ENCODE measurements at regions of chr2 and their contacts with region 1.

Region 1: DNA sequence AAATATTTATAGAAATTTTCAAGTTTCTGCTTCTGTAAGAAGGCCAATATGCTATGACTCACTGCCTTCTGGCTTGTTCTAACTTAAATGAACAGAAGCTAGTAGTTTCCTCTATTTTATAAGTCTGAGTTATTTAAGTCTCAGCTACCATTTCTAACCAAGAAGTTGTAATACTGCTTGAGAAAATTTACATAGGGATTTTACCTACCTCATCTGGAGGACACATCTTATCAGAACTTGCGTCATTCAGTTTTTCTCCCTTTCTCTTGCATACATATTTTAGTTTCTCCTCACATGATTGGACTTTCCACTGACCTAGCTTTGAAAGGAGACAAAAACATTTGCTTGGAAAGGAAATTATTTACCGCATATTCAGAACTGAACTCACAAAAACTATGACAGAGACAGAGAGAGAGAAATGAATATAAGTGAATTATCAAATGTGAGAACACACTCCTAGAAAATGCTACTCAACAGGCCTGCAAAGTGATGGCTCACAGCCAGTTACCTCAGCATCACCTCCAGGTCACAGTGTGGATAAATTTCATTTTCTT is 81.1 kb upstream of the CD302 start:
- DNase-seq: peak; percentile 74
- ATAC-seq: peak; percentile 87
- H3K4me3 Mint-ChIP-seq: no peak overlapping the region
- H3K27ac Mint-ChIP-seq: peak overlapping the region; percentile 76
- H3K4me1 Mint-ChIP-seq: peaks cover 62% of the 10 kb centered on the region
- H3K27me3 Mint-ChIP-seq: no peaks in the 10 kb centered on the region

Region 2: DNA sequence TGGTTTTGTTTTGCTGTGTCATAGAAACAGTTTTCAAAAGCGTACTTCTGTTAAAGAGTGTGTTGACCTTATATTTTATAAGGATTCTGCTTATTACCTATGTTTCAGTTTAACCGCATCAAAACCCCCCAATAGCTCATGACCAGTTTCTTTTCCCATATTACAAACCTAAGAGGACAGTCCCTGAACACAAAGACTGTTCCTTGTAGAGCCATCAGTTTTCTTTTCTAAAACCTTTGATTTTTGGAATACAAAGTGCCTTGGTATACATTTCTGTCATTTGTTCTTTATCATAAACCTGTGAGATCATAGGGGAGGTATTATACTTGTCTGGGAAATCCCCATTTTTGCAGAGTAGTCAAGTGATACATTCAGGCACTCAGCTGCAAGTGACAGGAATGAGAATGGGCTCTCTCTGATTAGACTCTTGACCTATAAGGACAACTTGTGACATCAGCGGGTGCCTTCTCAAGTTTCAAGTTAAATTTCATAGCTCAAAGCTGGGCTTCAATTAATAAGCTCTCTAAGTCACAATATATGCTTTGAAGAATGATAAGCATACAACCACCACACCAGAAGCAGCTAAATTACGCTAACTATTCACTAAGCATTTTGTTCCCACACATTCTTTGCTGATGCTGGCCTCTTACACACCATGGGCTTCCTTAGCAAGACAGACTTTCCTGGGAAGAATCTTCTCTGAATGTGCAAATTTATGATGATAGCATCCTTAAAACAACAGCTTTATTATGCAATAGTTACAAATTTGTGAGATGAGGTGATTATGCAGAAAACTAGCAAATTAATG is 16.3 kb after region 1 on chr2:
- CTCF ChIA-PET with region 1: interaction called, 10 read pairs
- POLR2A ChIA-PET with region 1: interaction called, 15 read pairs
- intact Hi-C with region 1: loop called (anchors 1 kb)
- DNase-seq: peak; percentile 51
- ATAC-seq: peak; percentile 86
- H3K4me3 Mint-ChIP-seq: peak overlapping the region; percentile 46
- H3K27ac Mint-ChIP-seq: peak overlapping the region; percentile 82
- H3K4me1 Mint-ChIP-seq: peaks cover 97% of the 10 kb centered on the region
- H3K27me3 Mint-ChIP-seq: no peaks in the 10 kb centered on the region

Region 3: GRCh38 chr2:159921752-159922404 is 42.8 kb after region 1 on chr2:
- CTCF ChIA-PET with region 1: interaction called, 7 read pairs
- POLR2A ChIA-PET with region 1: interaction called, 4 read pairs
- intact Hi-C with region 1: loop called (anchors 1 kb)
- DNase-seq: peak; percentile 91
- ATAC-seq: peak; percentile 67
- H3K4me3 Mint-ChIP-seq: peak overlapping the region; percentile 1
- H3K27ac Mint-ChIP-seq: peak overlapping the region; percentile 58
- H3K4me1 Mint-ChIP-seq: peaks cover 41% of the 10 kb centered on the region
- H3K27me3 Mint-ChIP-seq: peaks cover 20% of the 10 kb centered on the region

Region 4: DNA sequence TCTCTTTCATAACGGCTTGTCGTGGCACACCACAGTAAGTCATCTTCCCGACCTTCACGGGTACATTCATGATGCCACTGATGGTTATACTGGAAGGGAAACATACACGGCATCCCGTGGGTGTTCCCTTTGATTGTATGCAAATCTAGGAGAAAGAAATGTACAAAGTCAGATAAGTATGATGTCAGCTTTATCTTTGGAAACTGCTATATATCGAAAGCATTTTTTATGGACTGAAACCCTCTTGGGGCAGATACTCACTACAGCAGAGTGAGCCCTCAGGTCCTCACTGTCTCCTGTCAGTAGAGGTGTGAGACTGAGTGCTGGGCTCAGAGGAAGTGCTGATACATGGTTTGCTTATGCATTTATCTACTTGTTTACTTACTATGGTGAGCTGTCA is 162.9 kb after region 1 on chr2:
- CTCF ChIA-PET with region 1: no interaction called
- POLR2A ChIA-PET with region 1: no interaction called
- intact Hi-C with region 1: loop called in 1 of 2 experiments (anchors 1 kb)
- DNase-seq: peak; percentile 80
- ATAC-seq: peak; percentile 99
- H3K4me3 Mint-ChIP-seq: no peak overlapping the region
- H3K27ac Mint-ChIP-seq: no peak overlapping the region
- H3K4me1 Mint-ChIP-seq: peaks cover 17% of the 10 kb centered on the region
- H3K27me3 Mint-ChIP-seq: peaks cover 7% of the 10 kb centered on the region

Measured in activated CD4-positive, alpha-beta T cell treated with anti-CD3 and anti-CD28 coated beads for 36 hours (primary cell).